ENCODE measurements at regions of chr2 and their contacts with region 1.

Region 1: GRCh38 chr2:73176881-73177644 is 25.3 kb upstream of the NOTO start:
- DNase-seq: peak; percentile 90 to 92 (median 92)
- ATAC-seq: peak; percentile 92 to 97 (median 96)
- H3K4me3 ChIP-seq: peak overlapping the region; percentile 46 to 51 (median 46)
- H3K27ac ChIP-seq: peak overlapping the region; percentile 7 to 50 (median 34)
- H3K4me1 ChIP-seq: peaks cover 0 to 17% (median 2%) of the 10 kb centered on the region in 4 donors
- H3K27me3 ChIP-seq: no peaks in the 10 kb centered on the region
- CTCF ChIP-seq: peak; percentile 98
- POLR2A ChIP-seq: no peak

Region 2: DNA sequence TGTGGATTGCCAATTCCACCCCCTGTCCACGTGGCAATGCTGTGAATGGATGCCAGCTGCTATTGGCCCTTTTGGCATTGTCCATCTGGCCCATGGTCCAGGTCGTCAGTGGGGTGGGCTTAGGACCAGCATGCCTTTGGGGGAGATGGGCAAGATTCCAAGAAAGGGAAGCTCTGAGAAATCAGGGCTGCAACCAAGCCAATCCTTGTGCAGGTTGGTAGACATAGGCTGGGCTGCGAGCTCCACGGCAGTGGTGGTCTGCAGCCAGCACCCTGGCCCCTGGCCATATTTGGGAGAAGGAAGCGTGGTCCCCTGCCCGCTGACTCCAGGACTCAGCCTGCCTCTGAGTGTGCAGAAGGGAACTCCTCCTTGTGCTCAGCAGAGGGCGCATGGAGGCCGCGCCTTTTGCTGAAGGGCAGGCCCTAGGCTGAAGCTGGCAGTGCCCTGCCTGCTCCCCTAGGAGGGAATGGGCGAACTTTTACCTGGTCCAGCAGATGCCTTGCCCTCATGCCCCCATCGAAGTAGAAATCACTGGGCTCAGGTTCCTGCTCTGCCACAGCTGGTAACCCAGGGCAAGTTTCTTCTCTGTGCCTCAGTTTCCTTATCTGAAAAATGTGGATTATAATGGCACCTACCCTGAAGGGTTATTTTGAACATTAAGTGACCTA is 284.4 kb before region 1 on chr2:
- intact Hi-C with region 1: loop called (anchors 10 kb)
- DNase-seq: peak; percentile 74 to 84 (median 76)
- ATAC-seq: peak; percentile 76 to 83 (median 80)
- H3K4me3 ChIP-seq: no peak overlapping the region
- H3K27ac ChIP-seq: no peak overlapping the region
- H3K4me1 ChIP-seq: peaks cover 0 to 22% (median 9%) of the 10 kb centered on the region in 4 donors
- H3K27me3 ChIP-seq: no peaks in the 10 kb centered on the region
- CTCF ChIP-seq: peak; percentile 64 to 82 (median 80)
- POLR2A ChIP-seq: no peak